Endothelial cell of umbilical vein (primary cell): ENCODE measurements at regions of chr13 and their contacts with region 1.

Region 1: DNA sequence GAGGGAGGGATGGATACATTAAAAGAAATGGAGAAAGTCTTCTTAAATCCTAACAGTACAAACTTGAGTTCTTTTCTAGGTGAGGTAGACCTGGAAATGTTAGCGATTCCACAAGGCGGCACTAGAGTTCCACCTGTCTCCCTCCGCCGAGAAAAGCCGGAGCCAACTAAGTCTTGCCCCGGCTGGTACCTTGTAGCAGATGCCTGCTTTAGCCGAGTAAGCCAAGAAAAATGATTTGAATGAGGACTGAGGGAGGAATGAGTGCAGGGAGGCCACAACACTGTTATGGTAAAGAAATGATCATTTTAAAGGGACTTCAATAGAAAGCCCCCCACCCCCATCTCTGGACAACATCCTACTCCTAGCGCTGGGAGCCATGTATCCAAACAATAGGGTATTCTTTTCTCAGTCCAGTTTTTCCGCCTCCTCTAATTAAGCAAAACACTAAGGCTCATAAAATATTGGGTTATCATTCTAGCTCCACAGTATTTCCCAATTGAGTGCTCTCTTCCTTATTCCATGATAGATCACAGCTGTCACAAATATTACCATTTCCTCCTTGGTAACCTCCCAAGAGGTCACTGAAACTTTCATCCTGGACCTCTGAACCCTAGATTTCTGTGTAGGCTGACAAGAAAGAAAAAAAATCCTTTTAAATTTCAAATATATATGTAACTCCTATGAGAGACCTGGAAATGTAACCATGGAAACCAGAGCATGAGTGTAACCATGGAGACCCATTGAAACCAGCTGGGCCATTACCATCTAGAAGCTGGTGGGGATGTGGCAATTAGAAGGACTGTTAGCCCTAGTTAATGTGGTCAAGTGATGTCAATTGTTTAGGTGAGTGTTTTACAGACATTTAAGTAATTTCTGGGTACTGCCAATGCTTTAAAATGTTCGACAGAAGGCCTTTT is 58.3 kb downstream of the GPALPP1 start:
- DNase-seq: peak; percentile 88
- H3K4me3 ChIP-seq: peak overlapping the region; percentile 17 to 64 (median 36)
- H3K27ac ChIP-seq: no peak overlapping the region
- H3K4me1 ChIP-seq: peaks cover 7% of the 10 kb centered on the region
- H3K27me3 ChIP-seq: peaks cover 0 to 4% of the 10 kb centered on the region in 2 experiments
- CTCF ChIP-seq: peak; percentile 82 to 84
- POLR2A ChIP-seq: no peak

Region 2: DNA sequence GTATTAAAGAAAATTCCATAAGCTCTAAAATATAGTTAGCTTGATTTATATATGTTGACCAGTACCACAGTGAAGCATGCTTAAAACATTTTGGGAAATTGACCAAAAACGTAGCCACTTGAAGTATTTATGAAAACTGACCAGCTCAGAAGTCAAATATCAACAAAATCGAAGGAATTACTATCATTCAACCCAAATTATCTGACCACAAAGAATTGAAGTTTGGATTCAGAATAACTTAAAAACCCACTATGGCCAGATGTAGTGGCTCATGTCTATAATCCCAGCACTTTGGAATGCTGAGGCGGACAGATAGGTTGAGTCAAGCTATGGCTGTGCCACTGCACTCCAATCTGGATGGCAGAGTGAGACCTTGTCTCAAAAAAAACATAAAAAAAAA is 26.4 kb before region 1 on chr13:
- CTCF ChIA-PET with region 1: interaction called, 11 read pairs
- POLR2A ChIA-PET with region 1: no interaction called
- dilution Hi-C with region 1: no loop called
- intact Hi-C with region 1: no loop called
- DNase-seq: no peak
- H3K4me3 ChIP-seq: no peak overlapping the region
- H3K27ac ChIP-seq: no peak overlapping the region
- H3K4me1 ChIP-seq: no peaks in the 10 kb centered on the region
- H3K27me3 ChIP-seq: no peaks in the 10 kb centered on the region
- CTCF ChIP-seq: no peak
- POLR2A ChIP-seq: no peak

Region 3: GRCh38 chr13:45119991-45120864 is 72.6 kb after region 1 on chr13 and contains the start of gene GTF2F2:
- CTCF ChIA-PET with region 1: interaction called, 5 read pairs
- POLR2A ChIA-PET with region 1: no interaction called
- dilution Hi-C with region 1: no loop called
- intact Hi-C with region 1: loop called (anchors 1 kb)
- DNase-seq: peak; percentile 94
- H3K4me3 ChIP-seq: peak within 1 kb of the TSS; percentile 83 to 100 (median 85)
- H3K27ac ChIP-seq: peak within 1 kb of the TSS; percentile 59
- H3K4me1 ChIP-seq: peaks cover 16% of the 10 kb centered on the region
- H3K27me3 ChIP-seq: no peaks in the 10 kb centered on the region
- CTCF ChIP-seq: no peak
- POLR2A ChIP-seq: peak; percentile 72
- total RNA-seq, gene GTF2F2: 22.7 and 23.6 TPM in 2 replicates

Region 4: DNA sequence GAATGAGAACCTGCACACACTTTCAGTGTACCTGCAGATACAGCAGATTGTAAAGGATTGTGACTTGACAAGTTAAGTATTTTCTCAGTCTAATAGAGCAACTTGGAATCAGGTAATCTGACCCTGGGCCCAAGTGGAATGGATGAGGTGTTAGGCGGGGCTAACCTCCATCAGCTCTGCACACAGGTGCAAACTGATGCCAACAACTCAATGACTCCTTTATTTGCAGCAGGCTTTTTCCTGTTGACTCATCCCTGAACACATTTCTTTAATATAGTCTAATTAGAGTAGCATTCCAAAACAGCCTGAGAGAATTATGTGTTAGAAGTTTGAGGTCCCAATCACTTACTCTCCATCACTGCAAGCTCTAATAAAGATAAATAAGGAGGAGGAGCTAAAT is 244.5 kb after region 1 on chr13:
- CTCF ChIA-PET with region 1: interaction called, 13 read pairs
- POLR2A ChIA-PET with region 1: no interaction called
- dilution Hi-C with region 1: no loop called
- intact Hi-C with region 1: no loop called
- DNase-seq: no peak
- H3K4me3 ChIP-seq: no peak overlapping the region
- H3K27ac ChIP-seq: no peak overlapping the region
- H3K4me1 ChIP-seq: peaks cover 16% of the 10 kb centered on the region
- H3K27me3 ChIP-seq: no peaks in the 10 kb centered on the region
- CTCF ChIP-seq: no peak
- POLR2A ChIP-seq: no peak

Region 5: GRCh38 chr13:45310341-45311125 is 262.9 kb after region 1 on chr13:
- CTCF ChIA-PET with region 1: interaction called, 143 read pairs
- POLR2A ChIA-PET with region 1: no interaction called
- dilution Hi-C with region 1: no loop called
- intact Hi-C with region 1: loop called (anchors 1 kb)
- DNase-seq: no peak
- H3K4me3 ChIP-seq: peak overlapping the region in 1 of 3 experiments; percentile 15
- H3K27ac ChIP-seq: no peak overlapping the region
- H3K4me1 ChIP-seq: peaks cover 10% of the 10 kb centered on the region
- H3K27me3 ChIP-seq: peaks cover 0 to 2% of the 10 kb centered on the region in 2 experiments
- CTCF ChIP-seq: no peak
- POLR2A ChIP-seq: no peak